Activated CD4-positive, alpha-beta memory T cell treated with anti-CD3 and anti-CD28 coated beads for 36 hours (primary cell): ENCODE measurements at regions of chr13 and their contacts with region 1.

Region 1: GRCh38 chr13:73715114-73715910 is 418.9 kb downstream of the KLF12 start:
- DNase-seq: peak; percentile 77
- H3K4me3 Mint-ChIP-seq: peak overlapping the region; percentile 33
- H3K27ac Mint-ChIP-seq: peak overlapping the region; percentile 75
- H3K4me1 Mint-ChIP-seq: peaks cover 54% of the 10 kb centered on the region
- H3K27me3 Mint-ChIP-seq: no peaks in the 10 kb centered on the region

Region 2: DNA sequence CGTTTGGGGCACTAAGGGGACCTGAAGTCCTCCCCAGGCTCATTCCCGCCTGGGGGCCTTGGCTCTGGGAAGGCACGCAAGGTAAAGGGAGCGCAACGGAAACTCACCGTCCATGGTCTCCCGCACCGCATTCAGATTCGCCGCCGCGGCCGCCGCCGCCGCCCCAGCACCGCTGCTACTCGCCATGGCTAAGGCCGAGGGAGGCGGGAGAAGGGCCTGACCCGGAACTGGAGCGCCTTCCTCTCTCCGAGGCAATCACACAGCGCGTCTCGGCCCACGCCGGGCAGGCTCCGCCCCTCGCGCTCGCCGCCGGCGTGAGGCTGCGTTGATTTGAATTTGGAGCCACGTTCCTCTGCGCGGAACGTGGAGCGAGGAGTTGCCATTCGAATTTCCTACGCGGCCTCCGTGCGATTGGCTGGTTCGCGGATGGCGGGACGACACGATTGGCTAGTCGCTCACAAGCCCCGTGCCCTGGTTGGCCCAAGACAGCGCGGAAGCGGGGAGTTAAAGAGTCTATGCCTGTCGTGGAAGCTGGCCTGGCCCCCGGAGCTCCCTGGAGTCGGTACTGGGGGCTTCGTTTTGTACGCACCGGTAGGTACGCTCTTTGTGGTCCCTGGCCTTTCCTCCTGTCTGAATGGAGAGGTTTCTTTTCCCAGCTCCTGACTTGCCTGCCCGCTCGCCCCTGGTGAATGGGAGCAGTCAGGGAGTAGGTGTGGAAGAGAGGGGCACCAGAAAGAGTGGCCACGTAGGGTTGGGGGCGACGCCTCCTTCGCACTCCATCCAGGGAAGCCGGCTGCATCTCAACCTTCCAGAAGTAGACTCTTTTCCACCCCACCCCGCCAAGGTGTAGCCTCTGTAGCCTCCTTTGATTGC is 987.7 kb before region 1 on chr13 and contains the starts of genes BORA and MZT1:
- CTCF ChIA-PET with region 1: no interaction called
- POLR2A ChIA-PET with region 1: no interaction called
- intact Hi-C with region 1: loop called (anchors 5 kb)
- DNase-seq: peak; percentile 98
- H3K4me3 Mint-ChIP-seq: peak within 1 kb of the TSS; percentile 93
- H3K27ac Mint-ChIP-seq: peak within 1 kb of the TSS; percentile 76
- H3K4me1 Mint-ChIP-seq: peaks cover 41% of the 10 kb centered on the region
- H3K27me3 Mint-ChIP-seq: peaks cover 2% of the 10 kb centered on the region
- total RNA-seq, gene BORA: 18.4 to 19.1 TPM
- total RNA-seq, gene MZT1: 27.6 to 28.6 TPM

Region 3: GRCh38 chr13:73058736-73059459 is 656.4 kb before region 1 on chr13 and contains the start of gene KLF5:
- CTCF ChIA-PET with region 1: no interaction called
- POLR2A ChIA-PET with region 1: no interaction called
- intact Hi-C with region 1: loop called (anchors 2 kb)
- DNase-seq: peak; percentile 97
- H3K4me3 Mint-ChIP-seq: peak within 1 kb of the TSS; percentile 75
- H3K27ac Mint-ChIP-seq: no peak within 1 kb of the TSS
- H3K4me1 Mint-ChIP-seq: peaks cover 17% of the 10 kb centered on the region
- H3K27me3 Mint-ChIP-seq: peaks cover 16% of the 10 kb centered on the region
- total RNA-seq, gene KLF5: 3.3 to 4.2 TPM

Region 4: GRCh38 chr13:73303851-73304250 is 411.5 kb before region 1 on chr13:
- CTCF ChIA-PET with region 1: no interaction called
- POLR2A ChIA-PET with region 1: no interaction called
- intact Hi-C with region 1: loop called (anchors 5 kb)
- DNase-seq: peak; percentile 75
- H3K4me3 Mint-ChIP-seq: no peak overlapping the region
- H3K27ac Mint-ChIP-seq: no peak overlapping the region
- H3K4me1 Mint-ChIP-seq: peaks cover 13% of the 10 kb centered on the region
- H3K27me3 Mint-ChIP-seq: peaks cover 2% of the 10 kb centered on the region

Region 5: GRCh38 chr13:73702419-73703071 is 12.8 kb before region 1 on chr13:
- CTCF ChIA-PET with region 1: no interaction called
- POLR2A ChIA-PET with region 1: interaction called, 3 read pairs
- intact Hi-C with region 1: loop called (anchors 1 kb)
- DNase-seq: peak; percentile 56
- H3K4me3 Mint-ChIP-seq: peak overlapping the region; percentile 59
- H3K27ac Mint-ChIP-seq: peak overlapping the region; percentile 29
- H3K4me1 Mint-ChIP-seq: peaks cover 39% of the 10 kb centered on the region
- H3K27me3 Mint-ChIP-seq: no peaks in the 10 kb centered on the region

Region 6: DNA sequence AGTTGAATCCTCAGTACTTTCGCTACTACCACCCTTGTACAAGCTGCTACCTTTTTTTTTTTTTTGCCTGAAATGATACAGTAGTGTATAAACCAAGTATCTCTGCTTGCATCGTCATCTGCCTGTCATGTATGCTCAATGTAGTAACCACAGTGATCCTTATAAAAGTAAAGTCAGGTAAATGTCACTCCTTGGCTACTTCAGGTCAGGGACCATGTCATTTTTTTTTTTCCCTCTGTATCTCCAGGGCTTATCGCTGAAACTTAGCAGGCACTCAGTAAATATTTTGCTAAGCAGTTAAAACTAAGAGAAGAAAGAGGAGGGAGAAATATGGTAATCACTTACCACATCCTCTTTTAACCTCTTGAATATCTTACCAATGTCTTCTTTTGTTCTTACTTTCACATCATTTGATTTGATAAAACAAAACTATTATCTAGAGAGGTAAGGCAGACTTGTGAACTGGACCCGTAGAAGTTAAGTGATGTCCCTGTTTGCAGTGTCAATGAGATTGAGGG is 515.7 kb after region 1 on chr13:
- CTCF ChIA-PET with region 1: no interaction called
- POLR2A ChIA-PET with region 1: no interaction called
- intact Hi-C with region 1: loop called (anchors 5 kb)
- DNase-seq: no peak
- H3K4me3 Mint-ChIP-seq: peak overlapping the region; percentile 31
- H3K27ac Mint-ChIP-seq: peak overlapping the region; percentile 88
- H3K4me1 Mint-ChIP-seq: peaks cover 45% of the 10 kb centered on the region
- H3K27me3 Mint-ChIP-seq: no peaks in the 10 kb centered on the region